Activated naive CD8-positive, alpha-beta T cell treated with anti-CD3 and anti-CD28 coated beads, Interleukin-2, amount 10 ng/mL, durations not matched to agents 7 days and 5 days (primary cell): ENCODE measurements at regions of chr19 and their contacts with region 1.

Region 1: DNA sequence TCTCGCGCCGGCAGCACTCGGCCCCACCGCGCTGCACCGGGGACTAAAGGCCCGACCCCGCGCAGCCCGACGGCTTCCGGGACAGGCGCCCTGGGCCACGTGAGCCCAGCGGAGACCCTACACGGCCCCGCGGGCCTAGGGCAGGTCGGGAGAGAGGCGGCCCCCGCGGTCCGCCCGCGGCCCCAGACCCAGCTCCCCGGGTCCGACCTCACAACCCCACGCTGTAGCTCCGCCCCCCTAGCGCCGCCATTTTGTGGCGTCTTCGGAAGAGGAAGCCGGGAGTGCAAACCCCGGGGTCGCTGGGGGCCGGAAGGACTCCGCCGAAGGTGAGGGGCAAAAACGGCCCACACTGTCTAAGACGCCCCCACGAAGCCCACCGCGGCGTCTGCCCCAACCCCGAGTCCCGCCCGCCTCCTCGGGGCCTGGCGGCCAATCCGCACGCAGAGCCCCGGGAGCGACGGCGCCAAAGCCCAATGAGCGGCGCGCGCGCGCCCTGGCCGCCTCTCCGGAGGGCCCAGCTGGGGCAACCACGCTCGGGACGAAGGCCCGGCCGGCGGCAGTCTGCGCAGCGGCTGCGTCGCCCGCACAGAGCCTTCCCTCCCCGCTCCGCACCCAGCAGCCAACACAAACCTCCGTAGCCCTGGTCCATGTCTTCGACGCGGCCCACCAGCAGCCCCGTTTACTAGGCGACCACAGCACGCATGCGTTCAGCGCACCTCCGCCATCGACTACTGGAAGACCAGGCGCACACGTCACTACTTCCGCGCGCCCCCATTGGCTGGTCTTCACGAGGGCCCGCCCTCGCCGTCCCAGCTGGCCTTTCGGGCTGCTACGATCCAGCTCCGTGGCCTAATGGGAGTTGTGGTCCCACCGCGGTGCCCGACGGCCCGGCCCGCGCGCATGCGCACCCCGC is at the start of gene AKAP8:
- DNase-seq: peak; percentile 98
- ATAC-seq: peak; percentile 88
- H3K4me3 Mint-ChIP-seq: peak within 1 kb of the TSS; percentile 98
- H3K27ac Mint-ChIP-seq: peak within 1 kb of the TSS; percentile 100
- H3K4me1 Mint-ChIP-seq: peaks cover 22% of the 10 kb centered on the region
- H3K27me3 Mint-ChIP-seq: no peaks in the 10 kb centered on the region
- total RNA-seq, gene AKAP8: 57.4 to 59.1 TPM

Region 2: GRCh38 chr19:15144036-15144646 is 235.2 kb before region 1 on chr19:
- POLR2A ChIA-PET with region 1: no interaction called
- DNase-seq: no peak
- ATAC-seq: no peak
- H3K4me3 Mint-ChIP-seq: no peak overlapping the region
- H3K27ac Mint-ChIP-seq: no peak overlapping the region
- H3K4me1 Mint-ChIP-seq: peaks cover 6% of the 10 kb centered on the region
- H3K27me3 Mint-ChIP-seq: peaks cover 3% of the 10 kb centered on the region

Region 3: GRCh38 chr19:15332311-15332996 is 46.9 kb before region 1 on chr19 and contains the start of gene BRD4:
- POLR2A ChIA-PET with region 1: interaction called, 27 read pairs
- DNase-seq: peak; percentile 92
- ATAC-seq: peak; percentile 61
- H3K4me3 Mint-ChIP-seq: peak within 1 kb of the TSS; percentile 94
- H3K27ac Mint-ChIP-seq: peak within 1 kb of the TSS; percentile 95
- H3K4me1 Mint-ChIP-seq: peaks cover 35% of the 10 kb centered on the region
- H3K27me3 Mint-ChIP-seq: no peaks in the 10 kb centered on the region
- total RNA-seq, gene BRD4: 132 to 134 TPM

Region 4: GRCh38 chr19:15358918-15359317 is 20.4 kb before region 1 on chr19:
- POLR2A ChIA-PET with region 1: interaction called, 10 read pairs
- DNase-seq: no peak
- ATAC-seq: no peak
- H3K4me3 Mint-ChIP-seq: no peak overlapping the region
- H3K27ac Mint-ChIP-seq: no peak overlapping the region
- H3K4me1 Mint-ChIP-seq: peaks cover 1% of the 10 kb centered on the region
- H3K27me3 Mint-ChIP-seq: no peaks in the 10 kb centered on the region

Region 5: DNA sequence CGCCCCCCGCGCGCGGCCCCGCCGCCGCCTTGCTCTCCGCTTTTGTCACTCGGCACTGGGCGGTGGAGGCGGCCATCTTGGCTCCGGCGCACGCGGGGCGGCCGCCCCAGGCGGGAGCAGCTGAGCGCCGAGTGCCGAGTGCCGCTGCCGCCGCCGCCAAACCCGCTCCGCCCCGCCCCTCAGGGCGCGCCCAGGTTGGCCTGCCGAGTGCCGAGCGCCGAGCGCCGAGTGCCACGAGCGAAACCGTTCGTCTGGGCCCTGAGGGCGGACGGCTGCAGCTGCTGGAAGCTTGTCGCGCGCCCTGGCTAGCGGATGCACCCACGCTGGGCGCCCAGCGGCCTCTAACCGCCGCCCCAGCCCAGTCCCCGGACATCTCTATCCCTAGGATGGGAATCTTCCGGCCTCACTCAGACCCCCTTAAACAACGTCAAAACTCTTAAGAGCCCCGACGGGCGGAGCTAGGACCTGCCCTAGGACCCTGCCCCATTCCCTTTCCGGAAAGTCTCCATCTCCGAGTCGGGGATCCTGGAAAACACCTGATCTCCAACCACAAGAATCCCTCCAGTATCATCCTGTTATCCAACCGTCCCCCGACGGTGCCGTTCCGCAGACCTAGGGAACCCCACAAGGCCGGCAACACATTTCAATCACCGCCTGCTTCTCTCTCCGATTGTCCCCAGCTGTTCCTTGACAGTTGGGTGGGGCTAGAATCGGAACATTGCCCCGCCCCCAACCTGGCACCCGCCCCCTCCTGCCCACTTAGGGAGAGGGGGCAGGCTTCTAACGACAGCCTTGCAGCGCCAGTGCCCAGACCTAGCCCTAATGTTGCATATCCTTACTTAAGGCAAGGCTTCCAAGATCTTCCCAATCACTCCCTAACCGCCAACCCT is 53.5 kb after region 1 on chr19:
- POLR2A ChIA-PET with region 1: interaction called, 21 read pairs
- DNase-seq: peak; percentile 98
- ATAC-seq: peak; percentile 76
- H3K4me3 Mint-ChIP-seq: peak overlapping the region; percentile 93
- H3K27ac Mint-ChIP-seq: peak overlapping the region; percentile 96
- H3K4me1 Mint-ChIP-seq: peaks cover 22% of the 10 kb centered on the region
- H3K27me3 Mint-ChIP-seq: no peaks in the 10 kb centered on the region